Dorsolateral prefrontal cortex (tissue), 120 donors: ENCODE measurements at regions of chr7 and their contacts with region 1.

Region 1: GRCh38 chr7:92933810-92934449 is 97.6 kb upstream of the CDK6 start:
- DNase-seq: no peak
- H3K4me3 ChIP-seq: no peak overlapping the region
- H3K27ac ChIP-seq: no peak overlapping the region
- H3K27me3 ChIP-seq: no peaks in the 10 kb centered on the region
- CTCF ChIP-seq: no peak

Region 2: GRCh38 chr7:92778972-92779371 is 155.0 kb before region 1 on chr7:
- intact Hi-C with region 1: no loop called
- DNase-seq: no peak
- H3K4me3 ChIP-seq: no peak overlapping the region
- H3K27ac ChIP-seq: peak overlapping the region in 3 of 59 donors; percentile 1 to 50 (median 5)
- H3K27me3 ChIP-seq: no peaks in the 10 kb centered on the region
- CTCF ChIP-seq: no peak

Region 3: DNA sequence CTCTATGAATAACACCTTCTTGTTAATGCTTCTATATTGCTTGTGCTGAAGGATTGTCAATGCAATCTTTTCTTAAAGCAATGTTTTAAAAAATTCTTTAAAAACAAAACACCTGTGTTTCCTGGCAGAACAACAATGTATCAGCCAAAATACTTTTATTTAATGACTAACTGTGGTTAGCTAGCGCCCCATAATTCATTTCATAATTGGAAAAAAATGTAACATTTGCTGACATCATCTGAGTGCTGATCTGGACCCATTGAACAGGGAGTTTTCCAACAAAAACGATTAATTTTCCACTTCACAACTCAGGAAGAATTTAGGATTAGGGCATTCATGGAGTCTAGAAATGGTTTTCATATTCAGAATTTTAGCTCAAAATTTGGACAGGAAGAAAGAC is 40.0 kb after region 1 on chr7:
- intact Hi-C with region 1: loop called in 1 of 2 experiments (anchors 2 kb)
- DNase-seq: no peak
- H3K4me3 ChIP-seq: no peak overlapping the region
- H3K27ac ChIP-seq: no peak overlapping the region
- H3K27me3 ChIP-seq: peaks cover 0 to 3% (median 0%) of the 10 kb centered on the region in 45 donors
- CTCF ChIP-seq: no peak

Region 4: DNA sequence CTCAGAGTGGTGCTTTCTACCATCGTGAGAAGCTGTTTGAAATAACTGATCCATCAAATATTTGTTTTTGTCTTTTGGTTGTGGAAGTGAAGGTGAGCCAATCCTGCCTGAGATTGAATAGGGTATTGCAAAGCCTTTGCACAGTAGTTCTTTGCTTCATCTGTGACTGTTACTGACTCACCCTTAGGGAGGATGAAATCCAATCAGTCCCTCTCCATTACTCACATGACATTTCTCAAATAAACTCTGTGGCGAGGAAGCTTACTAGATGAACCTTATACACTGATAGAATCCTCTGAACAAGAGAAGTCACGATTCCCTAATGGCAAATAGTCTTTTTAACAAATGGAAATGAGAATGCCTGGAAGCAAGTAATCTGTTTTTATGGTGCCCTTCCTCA is 260.5 kb after region 1 on chr7:
- intact Hi-C with region 1: no loop called
- DNase-seq: no peak
- H3K4me3 ChIP-seq: no peak overlapping the region
- H3K27ac ChIP-seq: no peak overlapping the region
- H3K27me3 ChIP-seq: peaks cover 0 to 6% (median 0%) of the 10 kb centered on the region in 45 donors
- CTCF ChIP-seq: no peak